Endothelial cell of umbilical vein (primary cell): ENCODE measurements at regions of chr2 and their contacts with region 1.

Region 1: DNA sequence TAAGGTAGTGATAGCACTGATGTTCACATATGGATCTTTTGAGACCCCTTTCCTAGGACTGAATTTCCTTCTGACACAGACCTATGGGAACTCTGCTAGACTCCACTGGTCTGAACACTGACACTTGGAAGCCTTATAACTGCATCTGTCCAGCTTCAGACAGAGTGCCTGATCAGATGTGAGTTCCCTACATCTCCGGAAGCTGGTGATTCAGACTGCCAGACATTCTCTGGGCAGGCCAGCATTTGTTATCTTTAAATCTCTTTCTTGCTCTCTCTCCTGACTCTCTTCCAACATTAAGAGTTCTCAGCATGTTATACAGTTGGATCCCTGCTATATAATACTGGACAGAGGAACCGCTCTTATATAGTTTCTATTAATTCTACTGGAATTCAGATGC is 408.5 kb downstream of the ZEB2 start:
- DNase-seq: peak; percentile 78
- H3K4me3 ChIP-seq: no peak overlapping the region
- H3K27ac ChIP-seq: peak overlapping the region; percentile 36
- H3K4me1 ChIP-seq: peaks cover 10% of the 10 kb centered on the region
- H3K27me3 ChIP-seq: no peaks in the 10 kb centered on the region
- CTCF ChIP-seq: no peak
- POLR2A ChIP-seq: no peak

Region 2: DNA sequence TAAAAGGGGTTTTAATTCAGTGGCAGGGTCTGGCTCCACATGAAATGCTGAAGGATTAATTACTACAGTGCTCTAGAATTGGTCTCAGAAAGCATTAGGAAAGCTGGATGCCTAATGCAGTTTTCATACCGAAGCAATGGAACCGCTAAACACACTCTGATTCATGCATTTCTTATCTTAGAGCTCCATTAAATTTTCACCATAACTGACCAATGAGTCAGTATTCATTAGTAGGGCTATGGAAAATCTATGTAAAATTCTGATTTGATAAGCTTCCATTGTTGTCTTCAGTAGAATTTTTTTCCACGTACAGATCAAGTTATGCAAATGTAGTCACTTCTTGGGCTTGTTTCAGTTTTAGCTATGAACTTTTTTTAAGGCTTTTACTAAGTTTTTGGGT is 622.3 kb before region 1 on chr2:
- CTCF ChIA-PET with region 1: no interaction called
- POLR2A ChIA-PET with region 1: no interaction called
- dilution Hi-C with region 1: no loop called
- intact Hi-C with region 1: loop called (anchors 10 kb)
- DNase-seq: peak; percentile 81
- H3K4me3 ChIP-seq: no peak overlapping the region
- H3K27ac ChIP-seq: peak overlapping the region; percentile 10
- H3K4me1 ChIP-seq: peaks cover 3% of the 10 kb centered on the region
- H3K27me3 ChIP-seq: no peaks in the 10 kb centered on the region
- CTCF ChIP-seq: no peak
- POLR2A ChIP-seq: no peak

Region 3: DNA sequence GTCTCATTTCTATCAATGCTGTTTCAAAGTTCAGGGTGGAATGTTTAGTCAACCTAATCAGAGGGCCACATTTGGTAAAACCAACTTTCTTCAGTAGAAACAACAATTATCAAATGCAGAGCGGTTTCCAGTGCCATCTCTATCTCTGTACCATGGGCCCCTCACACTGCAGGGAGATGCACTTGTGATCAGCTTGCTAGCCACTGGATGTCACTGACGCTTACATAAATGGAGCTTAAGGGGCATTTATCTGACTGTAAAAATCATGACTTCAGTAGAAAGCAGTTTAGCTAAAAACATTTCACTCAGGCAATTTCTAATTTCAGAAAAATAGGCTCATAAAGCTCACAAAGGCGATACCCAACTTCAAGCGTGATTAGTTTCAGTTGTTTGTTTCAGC is 269.5 kb before region 1 on chr2:
- CTCF ChIA-PET with region 1: no interaction called
- POLR2A ChIA-PET with region 1: no interaction called
- dilution Hi-C with region 1: no loop called
- intact Hi-C with region 1: no loop called
- DNase-seq: peak; percentile 25
- H3K4me3 ChIP-seq: no peak overlapping the region
- H3K27ac ChIP-seq: no peak overlapping the region
- H3K4me1 ChIP-seq: no peaks in the 10 kb centered on the region
- H3K27me3 ChIP-seq: peaks cover 0 to 1% of the 10 kb centered on the region in 2 experiments
- CTCF ChIP-seq: peak in 1 of 2 donors; percentile 4
- POLR2A ChIP-seq: no peak

Region 4: GRCh38 chr2:144004742-144005141 is 106.7 kb before region 1 on chr2:
- CTCF ChIA-PET with region 1: no interaction called
- POLR2A ChIA-PET with region 1: no interaction called
- dilution Hi-C with region 1: no loop called
- intact Hi-C with region 1: no loop called
- DNase-seq: no peak
- H3K4me3 ChIP-seq: no peak overlapping the region
- H3K27ac ChIP-seq: no peak overlapping the region
- H3K4me1 ChIP-seq: no peaks in the 10 kb centered on the region
- H3K27me3 ChIP-seq: no peaks in the 10 kb centered on the region
- CTCF ChIP-seq: no peak
- POLR2A ChIP-seq: no peak